Activated CD8-positive, alpha-beta memory T cell treated with anti-CD3 and anti-CD28 coated beads, Interleukin-2, amount 10 ng/mL, durations not matched to agents 7 days and 5 days (primary cell): ENCODE measurements at regions of chr15 and their contacts with region 1.

Region 1: GRCh38 chr15:56869573-56869972 is 48.9 kb upstream of the TCF12 start:
- DNase-seq: peak; percentile 55
- ATAC-seq: no peak
- H3K4me3 Mint-ChIP-seq: no peak overlapping the region
- H3K27ac Mint-ChIP-seq: no peak overlapping the region
- H3K4me1 Mint-ChIP-seq: no peaks in the 10 kb centered on the region
- H3K27me3 Mint-ChIP-seq: peaks cover 3% of the 10 kb centered on the region

Region 2: DNA sequence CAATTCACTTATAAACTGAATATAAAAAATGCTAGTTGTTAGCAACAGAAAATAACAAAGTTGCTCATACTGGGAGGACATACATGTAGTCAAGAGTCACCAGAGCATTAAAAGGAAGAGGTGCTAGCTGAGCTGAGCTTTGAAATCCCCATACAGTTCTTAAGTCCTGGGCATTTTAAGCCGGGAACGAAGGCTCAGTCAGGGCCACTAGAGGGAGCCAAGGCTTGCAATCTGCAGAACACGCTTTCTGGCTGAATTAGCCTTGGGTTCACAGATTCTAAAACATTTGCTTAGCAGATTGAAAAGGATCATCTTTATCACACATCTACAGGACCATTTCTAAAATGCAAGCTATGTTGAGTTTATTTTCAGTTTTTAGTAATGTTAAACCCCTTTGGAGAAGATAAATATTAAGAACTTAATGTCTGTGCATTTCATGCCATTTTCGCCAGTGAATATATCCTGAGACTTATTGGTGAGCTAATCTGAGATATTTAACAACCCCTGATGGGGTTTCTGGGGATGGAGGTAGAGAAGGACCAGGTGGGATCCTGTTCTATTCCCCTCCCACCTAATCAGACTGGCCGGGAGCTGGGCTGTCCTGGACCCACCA is 378.4 kb before region 1 on chr15:
- CTCF ChIA-PET with region 1: interaction called, 24 read pairs
- DNase-seq: peak; percentile 73
- ATAC-seq: peak; percentile 64
- H3K4me3 Mint-ChIP-seq: no peak overlapping the region
- H3K27ac Mint-ChIP-seq: no peak overlapping the region
- H3K4me1 Mint-ChIP-seq: peaks cover 10% of the 10 kb centered on the region
- H3K27me3 Mint-ChIP-seq: peaks cover 6% of the 10 kb centered on the region

Region 3: DNA sequence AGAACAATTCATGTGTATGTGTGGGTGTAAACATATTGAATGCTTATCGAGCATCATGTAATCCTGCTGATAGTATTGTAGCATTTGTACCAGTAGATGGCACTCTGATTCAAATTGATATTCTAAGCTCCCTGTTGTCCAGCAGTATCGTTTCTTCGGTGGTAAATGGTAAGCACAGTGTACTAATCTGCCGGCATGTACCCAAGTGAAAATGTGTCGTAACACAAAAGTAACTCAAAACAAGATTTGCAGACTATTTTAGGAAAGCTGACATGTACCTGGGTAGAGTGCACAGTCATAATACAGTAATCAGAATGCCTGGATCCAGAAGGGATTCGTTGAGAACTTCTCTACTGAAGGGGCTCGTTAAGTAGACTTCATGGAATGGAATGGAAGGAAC is 372.9 kb before region 1 on chr15:
- CTCF ChIA-PET with region 1: interaction called, 24 read pairs
- DNase-seq: no peak
- ATAC-seq: peak; percentile 74
- H3K4me3 Mint-ChIP-seq: no peak overlapping the region
- H3K27ac Mint-ChIP-seq: no peak overlapping the region
- H3K4me1 Mint-ChIP-seq: peaks cover 13% of the 10 kb centered on the region
- H3K27me3 Mint-ChIP-seq: peaks cover 23% of the 10 kb centered on the region

Region 4: GRCh38 chr15:56719774-56720555 is 149.6 kb before region 1 on chr15:
- CTCF ChIA-PET with region 1: no interaction called
- DNase-seq: no peak
- ATAC-seq: no peak
- H3K4me3 Mint-ChIP-seq: no peak overlapping the region
- H3K27ac Mint-ChIP-seq: no peak overlapping the region
- H3K4me1 Mint-ChIP-seq: peaks cover 11% of the 10 kb centered on the region
- H3K27me3 Mint-ChIP-seq: no peaks in the 10 kb centered on the region

Region 5: DNA sequence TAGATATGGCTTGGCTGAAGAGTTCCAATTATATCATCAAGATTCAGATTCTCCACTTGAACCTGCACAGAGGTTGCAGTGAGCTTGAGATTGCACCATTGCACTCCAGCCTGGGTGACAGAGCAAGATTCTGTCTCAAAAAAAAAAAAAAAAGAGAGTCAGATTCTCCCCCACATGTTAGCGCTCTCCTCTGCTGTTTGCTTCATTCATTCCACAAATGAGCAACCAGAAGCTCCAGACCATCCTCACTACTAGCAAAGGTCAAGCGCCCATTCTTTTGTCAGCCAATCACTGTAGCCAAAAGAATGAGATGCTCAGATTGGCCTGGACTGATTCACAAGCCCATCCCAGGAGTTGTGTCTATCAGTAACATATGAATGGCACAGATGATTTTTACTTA is 20.5 kb after region 1 on chr15:
- CTCF ChIA-PET with region 1: no interaction called
- DNase-seq: no peak
- ATAC-seq: no peak
- H3K4me3 Mint-ChIP-seq: no peak overlapping the region
- H3K27ac Mint-ChIP-seq: no peak overlapping the region
- H3K4me1 Mint-ChIP-seq: peaks cover 20% of the 10 kb centered on the region
- H3K27me3 Mint-ChIP-seq: no peaks in the 10 kb centered on the region